Heart left ventricle (tissue), 16 donors: ENCODE measurements at regions of chr7 and their contacts with region 1.

Region 1: DNA sequence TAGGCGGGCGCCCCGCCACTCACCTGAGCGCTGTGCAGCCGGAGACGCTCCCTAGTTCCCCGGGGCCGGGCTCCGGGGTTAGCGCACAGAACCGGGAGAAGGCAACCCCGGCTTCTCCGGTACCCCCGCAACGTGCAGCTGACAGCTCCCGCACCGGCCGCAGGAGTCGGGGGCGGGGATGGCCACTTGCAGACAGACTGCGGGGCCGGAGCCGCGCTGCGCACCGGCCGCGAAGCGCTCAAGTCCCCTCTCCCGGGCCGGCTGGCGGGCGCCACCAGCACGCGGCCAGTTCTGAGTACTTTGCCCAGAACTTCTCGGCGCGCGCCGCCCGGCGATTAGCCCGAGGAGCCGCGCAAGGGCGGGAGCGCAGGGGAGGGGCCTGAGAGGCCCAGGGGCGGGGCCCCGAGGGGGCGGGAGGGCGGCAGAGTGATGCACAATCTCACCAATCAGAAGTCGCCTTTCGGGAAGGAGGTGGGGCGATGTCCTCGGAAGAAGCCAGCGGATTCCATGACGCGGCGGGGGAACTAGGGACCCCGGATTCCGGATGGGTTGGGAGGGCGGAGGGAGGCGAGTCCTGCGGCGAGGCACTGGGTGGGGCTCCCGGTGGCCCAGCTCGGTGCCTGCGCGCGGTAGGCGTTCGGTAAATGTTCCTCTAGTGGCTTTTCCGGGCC is at the start of gene OSBPL3:
- DNase-seq: peak; percentile 96 to 97 (median 96)
- ATAC-seq: peak; percentile 98 to 99 (median 98)
- H3K4me3 ChIP-seq: peak within 1 kb of the TSS; percentile 63 to 93 (median 80)
- H3K27ac ChIP-seq: peak within 1 kb of the TSS; percentile 68 to 94 (median 88)
- H3K4me1 ChIP-seq: peaks cover 0 to 48% (median 11%) of the 10 kb centered on the region in 12 donors
- H3K27me3 ChIP-seq: no peaks in the 10 kb centered on the region
- CTCF ChIP-seq: peak in 1 of 12 donors; percentile 2
- POLR2A ChIP-seq: peak in 1 of 2 donors; percentile 72
- total RNA-seq, gene OSBPL3: 1.9 to 14.3 (median 5.0) TPM

Region 2: DNA sequence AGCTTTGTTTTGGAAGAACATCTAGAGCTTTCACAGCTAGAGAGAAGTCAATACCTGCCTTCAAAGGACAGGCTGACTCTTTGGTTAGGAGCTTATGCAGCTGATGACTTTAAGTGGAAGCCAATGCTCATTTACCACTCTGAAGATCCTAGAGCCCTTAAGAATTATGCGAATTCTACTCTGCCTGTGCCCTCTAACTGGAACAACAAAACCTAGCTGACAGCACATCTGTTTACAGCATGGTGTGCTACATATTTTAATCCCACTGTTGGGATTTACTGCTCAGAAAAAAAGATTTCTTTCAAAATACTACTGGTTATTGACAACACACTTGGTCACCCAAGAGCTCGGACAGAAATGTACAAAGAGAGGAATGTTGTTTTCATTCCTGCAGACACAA is 349.4 kb before region 1 on chr7:
- intact Hi-C with region 1: no loop called
- DNase-seq: no peak
- ATAC-seq: no peak
- H3K4me3 ChIP-seq: no peak overlapping the region
- H3K27ac ChIP-seq: no peak overlapping the region
- H3K4me1 ChIP-seq: no peaks in the 10 kb centered on the region
- H3K27me3 ChIP-seq: no peaks in the 10 kb centered on the region
- CTCF ChIP-seq: no peak
- POLR2A ChIP-seq: no peak

Region 3: GRCh38 chr7:24819916-24820689 is 159.9 kb before region 1 on chr7:
- intact Hi-C with region 1: loop called (anchors 2 to 5 kb)
- DNase-seq: peak; percentile 73 to 88 (median 84)
- ATAC-seq: peak; percentile 75 to 93 (median 91)
- H3K4me3 ChIP-seq: no peak overlapping the region
- H3K27ac ChIP-seq: peak overlapping the region in 1 of 12 donors; percentile 74
- H3K4me1 ChIP-seq: peaks cover 0 to 22% (median 7%) of the 10 kb centered on the region in 12 donors
- H3K27me3 ChIP-seq: no peaks in the 10 kb centered on the region
- CTCF ChIP-seq: peak; percentile 78 to 95 (median 87)
- POLR2A ChIP-seq: no peak

Region 4: GRCh38 chr7:24896031-24896501 is 83.9 kb before region 1 on chr7:
- intact Hi-C with region 1: loop called in 1 of 10 experiments (anchors 5 kb)
- DNase-seq: no peak
- ATAC-seq: no peak
- H3K4me3 ChIP-seq: no peak overlapping the region
- H3K27ac ChIP-seq: no peak overlapping the region
- H3K4me1 ChIP-seq: peaks cover 0 to 28% (median 0%) of the 10 kb centered on the region in 12 donors
- H3K27me3 ChIP-seq: no peaks in the 10 kb centered on the region
- CTCF ChIP-seq: no peak
- POLR2A ChIP-seq: no peak

Region 5: DNA sequence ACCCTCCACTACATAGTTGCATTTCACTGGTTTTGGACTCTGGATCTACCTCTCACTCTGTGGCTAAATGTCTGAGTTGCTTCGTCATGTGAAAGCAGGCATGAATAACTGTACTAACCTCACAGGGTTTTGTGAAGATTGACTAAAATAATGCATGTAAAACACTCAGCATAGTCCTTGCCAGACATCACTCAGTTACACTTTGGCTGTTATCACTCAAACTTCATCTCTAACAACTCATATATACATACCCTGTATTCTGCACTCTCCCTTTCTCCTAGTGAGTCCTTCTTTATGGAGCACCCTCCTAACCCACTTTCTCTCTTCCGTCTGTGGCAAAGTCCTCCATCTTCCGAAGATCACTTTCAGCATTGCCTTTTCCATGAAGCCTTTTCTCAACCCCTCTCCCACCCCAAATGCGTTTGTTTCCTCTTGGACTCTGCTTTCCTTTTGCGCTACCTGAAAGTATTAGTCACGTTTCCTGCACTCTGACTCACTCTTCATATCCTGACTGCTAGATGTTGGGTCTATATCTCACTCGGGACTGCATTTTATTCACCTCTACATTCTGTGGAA is 72.6 kb before region 1 on chr7:
- intact Hi-C with region 1: loop called in 1 of 10 experiments (anchors 5 kb)
- DNase-seq: no peak
- ATAC-seq: peak in 1 of 4 donors; percentile 17
- H3K4me3 ChIP-seq: no peak overlapping the region
- H3K27ac ChIP-seq: peak overlapping the region in 1 of 12 donors; percentile 32
- H3K4me1 ChIP-seq: peaks cover 0 to 76% (median 13%) of the 10 kb centered on the region in 12 donors
- H3K27me3 ChIP-seq: no peaks in the 10 kb centered on the region
- CTCF ChIP-seq: no peak
- POLR2A ChIP-seq: no peak

Region 6: DNA sequence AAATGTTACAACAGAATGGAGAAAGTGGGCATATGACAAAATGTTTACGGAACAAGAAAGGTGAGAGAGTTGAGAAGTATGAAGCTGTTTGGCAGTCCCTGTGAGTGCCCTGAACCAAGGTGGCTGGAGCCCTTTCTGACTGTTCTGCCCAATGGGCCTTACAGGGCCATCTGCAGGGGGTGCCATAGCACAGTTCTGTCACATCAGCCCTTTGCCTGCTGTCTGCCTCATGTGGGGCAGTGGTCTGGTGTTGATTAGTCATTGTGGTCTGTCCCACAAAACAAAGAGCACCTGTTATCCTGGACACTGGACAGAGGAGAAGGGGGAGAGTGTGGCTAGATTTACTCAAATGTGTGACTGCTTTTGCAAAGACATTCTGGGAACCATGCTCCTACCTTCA is 51.4 kb after region 1 on chr7:
- intact Hi-C with region 1: loop called in 1 of 10 experiments (anchors 5 kb)
- DNase-seq: no peak
- ATAC-seq: no peak
- H3K4me3 ChIP-seq: no peak overlapping the region
- H3K27ac ChIP-seq: no peak overlapping the region
- H3K4me1 ChIP-seq: peaks cover 0 to 16% (median 2%) of the 10 kb centered on the region in 12 donors
- H3K27me3 ChIP-seq: no peaks in the 10 kb centered on the region
- CTCF ChIP-seq: no peak
- POLR2A ChIP-seq: no peak

Region 7: GRCh38 chr7:25060487-25061055 is 80.6 kb after region 1 on chr7:
- intact Hi-C with region 1: loop called in 5 of 10 experiments (anchors 5 to 10 kb)
- DNase-seq: no peak
- ATAC-seq: no peak
- H3K4me3 ChIP-seq: no peak overlapping the region
- H3K27ac ChIP-seq: no peak overlapping the region
- H3K4me1 ChIP-seq: no peaks in the 10 kb centered on the region
- H3K27me3 ChIP-seq: peaks cover 0 to 3% (median 0%) of the 10 kb centered on the region in 9 donors
- CTCF ChIP-seq: no peak
- POLR2A ChIP-seq: no peak

Region 8: GRCh38 chr7:25069900-25070443 is 90.0 kb after region 1 on chr7:
- intact Hi-C with region 1: loop called in 8 of 10 experiments (anchors 2 to 10 kb)
- DNase-seq: peak in 3 of 5 donors; percentile 29 to 57 (median 49)
- ATAC-seq: peak in 3 of 4 donors; percentile 53 to 70 (median 56)
- H3K4me3 ChIP-seq: peak overlapping the region in 7 of 12 donors; percentile 12 to 47 (median 28)
- H3K27ac ChIP-seq: no peak overlapping the region
- H3K4me1 ChIP-seq: peaks cover 0 to 10% (median 0%) of the 10 kb centered on the region in 12 donors
- H3K27me3 ChIP-seq: no peaks in the 10 kb centered on the region
- CTCF ChIP-seq: peak; percentile 84 to 93 (median 90)
- POLR2A ChIP-seq: no peak